Naive thymus-derived CD4-positive, alpha-beta T cell (primary cell): ENCODE measurements at regions of chr9 and their contacts with region 1.

Region 1: GRCh38 chr9:20242510-20243189 is 379.6 kb downstream of the MLLT3 start:
- DNase-seq: peak in 8 of 9 donors; percentile 33 to 82 (median 76)
- ATAC-seq: peak; percentile 86
- H3K4me3 ChIP-seq: peak overlapping the region; percentile 42
- H3K4me3 Mint-ChIP-seq: peak overlapping the region; percentile 51 to 89 (median 83)
- H3K27ac ChIP-seq: peak overlapping the region; percentile 1
- H3K27ac Mint-ChIP-seq: peak overlapping the region; percentile 39 to 90 (median 74)
- H3K4me1 ChIP-seq: peaks cover 18 to 32% of the 10 kb centered on the region in 2 donors
- H3K4me1 Mint-ChIP-seq: peaks cover 38 to 84% (median 72%) of the 10 kb centered on the region in 7 donors
- H3K27me3 ChIP-seq: no peaks in the 10 kb centered on the region
- H3K27me3 Mint-ChIP-seq: no peaks in the 10 kb centered on the region

Region 2: GRCh38 chr9:19946441-19947109 is 296.1 kb before region 1 on chr9:
- CTCF ChIA-PET with region 1: no interaction called
- POLR2A ChIA-PET with region 1: no interaction called
- intact Hi-C with region 1: no loop called
- DNase-seq: peak in 3 of 9 donors; percentile 5 to 35 (median 22)
- ATAC-seq: peak; percentile 57
- H3K4me3 ChIP-seq: no peak overlapping the region
- H3K4me3 Mint-ChIP-seq: no peak overlapping the region
- H3K27ac ChIP-seq: no peak overlapping the region
- H3K27ac Mint-ChIP-seq: peak overlapping the region in 4 of 9 donors; percentile 10 to 64 (median 34)
- H3K4me1 ChIP-seq: no peaks in the 10 kb centered on the region
- H3K4me1 Mint-ChIP-seq: peaks cover 2 to 24% (median 11%) of the 10 kb centered on the region in 7 donors
- H3K27me3 ChIP-seq: no peaks in the 10 kb centered on the region
- H3K27me3 Mint-ChIP-seq: peaks cover 0 to 14% (median 7%) of the 10 kb centered on the region in 5 donors

Region 3: GRCh38 chr9:20139763-20140290 is 102.8 kb before region 1 on chr9:
- CTCF ChIA-PET with region 1: no interaction called
- POLR2A ChIA-PET with region 1: no interaction called
- intact Hi-C with region 1: no loop called
- DNase-seq: no peak
- ATAC-seq: no peak
- H3K4me3 ChIP-seq: no peak overlapping the region
- H3K4me3 Mint-ChIP-seq: no peak overlapping the region
- H3K27ac ChIP-seq: no peak overlapping the region
- H3K27ac Mint-ChIP-seq: no peak overlapping the region
- H3K4me1 ChIP-seq: no peaks in the 10 kb centered on the region
- H3K4me1 Mint-ChIP-seq: peaks cover 1 to 21% (median 12%) of the 10 kb centered on the region in 7 donors
- H3K27me3 ChIP-seq: no peaks in the 10 kb centered on the region
- H3K27me3 Mint-ChIP-seq: peaks cover 0 to 7% (median 6%) of the 10 kb centered on the region in 5 donors

Region 4: GRCh38 chr9:20225841-20226240 is 16.8 kb before region 1 on chr9:
- CTCF ChIA-PET with region 1: no interaction called
- POLR2A ChIA-PET with region 1: interaction called, 3 read pairs
- intact Hi-C with region 1: loop called in 1 of 2 experiments (anchors 2 kb)
- DNase-seq: no peak
- ATAC-seq: no peak
- H3K4me3 ChIP-seq: peak overlapping the region; percentile 3
- H3K4me3 Mint-ChIP-seq: peak overlapping the region in 3 of 10 donors; percentile 26 to 67 (median 34)
- H3K27ac ChIP-seq: no peak overlapping the region
- H3K27ac Mint-ChIP-seq: peak overlapping the region in 1 of 9 donors; percentile 35
- H3K4me1 ChIP-seq: no peaks in the 10 kb centered on the region
- H3K4me1 Mint-ChIP-seq: peaks cover 15 to 67% (median 43%) of the 10 kb centered on the region in 7 donors
- H3K27me3 ChIP-seq: no peaks in the 10 kb centered on the region
- H3K27me3 Mint-ChIP-seq: peaks cover 0 to 4% (median 0%) of the 10 kb centered on the region in 5 donors

Region 5: GRCh38 chr9:20256284-20256948 is 13.8 kb after region 1 on chr9:
- CTCF ChIA-PET with region 1: interaction called, 4 read pairs
- POLR2A ChIA-PET with region 1: interaction called, 9 read pairs
- intact Hi-C with region 1: loop called in 1 of 2 experiments (anchors 1 kb)
- DNase-seq: peak in 4 of 9 donors; percentile 8 to 30 (median 14)
- ATAC-seq: peak; percentile 27
- H3K4me3 ChIP-seq: no peak overlapping the region
- H3K4me3 Mint-ChIP-seq: peak overlapping the region in 6 of 10 donors; percentile 6 to 58 (median 40)
- H3K27ac ChIP-seq: no peak overlapping the region
- H3K27ac Mint-ChIP-seq: peak overlapping the region; percentile 21 to 86 (median 72)
- H3K4me1 ChIP-seq: peaks cover 0 to 16% of the 10 kb centered on the region in 2 donors
- H3K4me1 Mint-ChIP-seq: peaks cover 6 to 39% (median 32%) of the 10 kb centered on the region in 7 donors
- H3K27me3 ChIP-seq: no peaks in the 10 kb centered on the region
- H3K27me3 Mint-ChIP-seq: no peaks in the 10 kb centered on the region

Region 6: DNA sequence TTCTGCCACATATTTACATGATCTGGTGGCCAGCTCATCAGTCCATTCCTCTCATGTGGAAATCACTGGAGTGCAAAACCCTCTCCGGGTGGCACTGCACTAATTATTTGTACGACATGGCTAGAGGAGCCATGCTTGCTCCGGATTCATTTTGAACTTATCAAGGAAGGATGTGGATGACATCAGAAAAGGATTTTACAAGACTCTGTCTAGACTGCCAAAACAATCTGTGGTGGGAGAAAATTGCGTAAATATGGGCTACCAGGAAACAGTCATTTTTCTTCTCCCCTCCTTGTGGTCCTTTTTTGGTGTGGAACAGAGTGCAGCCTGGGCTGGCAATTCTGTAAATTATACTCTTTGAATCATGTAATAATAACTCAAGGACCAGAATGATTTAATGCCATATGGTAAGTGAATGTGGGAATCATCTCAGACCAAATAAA is 1362.9 kb after region 1 on chr9:
- CTCF ChIA-PET with region 1: no interaction called
- POLR2A ChIA-PET with region 1: no interaction called
- intact Hi-C with region 1: no loop called
- DNase-seq: no peak
- ATAC-seq: no peak
- H3K4me3 ChIP-seq: no peak overlapping the region
- H3K4me3 Mint-ChIP-seq: no peak overlapping the region
- H3K27ac ChIP-seq: no peak overlapping the region
- H3K27ac Mint-ChIP-seq: no peak overlapping the region
- H3K4me1 ChIP-seq: no peaks in the 10 kb centered on the region
- H3K4me1 Mint-ChIP-seq: peaks cover 0 to 58% (median 28%) of the 10 kb centered on the region in 7 donors
- H3K27me3 ChIP-seq: no peaks in the 10 kb centered on the region
- H3K27me3 Mint-ChIP-seq: peaks cover 0 to 13% (median 0%) of the 10 kb centered on the region in 5 donors